ENCODE measurements at regions of chr3 and their contacts with region 1.

Region 1: DNA sequence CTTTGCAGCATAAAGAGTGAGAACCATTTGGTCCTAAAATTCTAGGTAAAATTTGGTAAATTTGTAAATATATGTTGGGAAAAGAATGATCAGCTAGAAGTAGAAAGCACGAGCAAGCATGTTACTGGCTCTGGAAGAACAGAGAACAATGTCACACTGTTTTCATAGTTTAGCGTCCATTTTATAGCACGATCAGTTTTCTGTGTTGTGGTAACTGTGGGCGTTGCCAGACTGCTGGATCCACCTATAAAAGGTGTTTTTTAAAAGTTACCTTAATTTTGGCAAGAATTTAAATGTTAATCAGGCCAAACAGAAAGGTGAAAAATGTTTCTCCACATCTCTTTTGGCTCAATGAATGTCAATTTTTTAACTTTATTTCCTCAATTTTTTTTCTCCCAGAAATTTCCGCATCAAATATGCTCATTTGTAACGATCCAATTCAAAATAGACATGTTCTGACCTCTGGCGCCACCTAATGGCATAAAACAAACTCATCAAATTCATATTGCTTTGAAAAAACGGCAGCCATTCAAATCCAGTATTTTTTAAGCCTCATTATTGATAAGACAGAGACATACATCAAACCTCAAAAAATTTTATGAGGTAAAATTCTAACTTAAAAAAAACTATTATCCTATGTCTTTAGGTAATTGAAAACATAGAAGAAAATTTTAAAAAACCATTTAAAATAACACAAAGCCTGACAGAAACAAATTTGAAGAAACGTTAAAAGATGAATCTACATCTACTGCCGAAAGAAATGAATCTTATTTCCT is 5.5 kb upstream of the GP5 start:
- DNase-seq: no peak
- ATAC-seq: peak; percentile 58; the same call in 2 of the 3 replicates
- H3K4me3 ChIP-seq: no peak overlapping the region
- H3K27ac ChIP-seq: no peak overlapping the region
- H3K4me1 ChIP-seq: no peaks in the 10 kb centered on the region
- H3K27me3 ChIP-seq: no peaks in the 10 kb centered on the region
- CTCF ChIP-seq: peak; percentile 55 to 65 (median 63)
- EP300 ChIP-seq: no peak
- POLR2A ChIP-seq: no peak
- RAD21 ChIP-seq: peak; percentile 56

Region 2: GRCh38 chr3:194333212-194333980 is 71.2 kb before region 1 on chr3:
- CTCF ChIA-PET with region 1: interaction called, 20 read pairs
- POLR2A ChIA-PET with region 1: no interaction called
- RAD21 ChIA-PET with region 1: interaction called, 10 read pairs
- SMC1A ChIA-PET with region 1: interaction called, 4 read pairs
- in situ Hi-C with region 1: loop called (anchors 5 kb)
- intact Hi-C with region 1: loop called (anchors 1 kb)
- DNase-seq: no peak
- ATAC-seq: peak; percentile 99
- H3K4me3 ChIP-seq: peak overlapping the region; percentile 49; the same call in 1 of the 2 replicates
- H3K27ac ChIP-seq: no peak overlapping the region
- H3K4me1 ChIP-seq: no peaks in the 10 kb centered on the region
- H3K27me3 ChIP-seq: peaks cover 0 to 7% of the 10 kb centered on the region in 2 experiments; a peak in 3 of 4 replicates
- CTCF ChIP-seq: peak; percentile 95 to 99 (median 97); a peak in 5 of 6 replicates
- EP300 ChIP-seq: no peak
- POLR2A ChIP-seq: no peak
- RAD21 ChIP-seq: peak; percentile 96

Region 3: GRCh38 chr3:194344012-194344411 is 60.5 kb before region 1 on chr3:
- CTCF ChIA-PET with region 1: interaction called, 37 read pairs
- POLR2A ChIA-PET with region 1: no interaction called
- RAD21 ChIA-PET with region 1: interaction called, 4 read pairs
- SMC1A ChIA-PET with region 1: interaction called, 4 read pairs
- in situ Hi-C with region 1: loop called (anchors 5 kb)
- intact Hi-C with region 1: no loop called
- DNase-seq: no peak
- ATAC-seq: peak; percentile 89
- H3K4me3 ChIP-seq: no peak overlapping the region
- H3K27ac ChIP-seq: no peak overlapping the region
- H3K4me1 ChIP-seq: no peaks in the 10 kb centered on the region
- H3K27me3 ChIP-seq: no peaks in the 10 kb centered on the region; a peak in 3 of 4 replicates
- CTCF ChIP-seq: peak; percentile 84 to 97 (median 91)
- EP300 ChIP-seq: no peak
- POLR2A ChIP-seq: no peak
- RAD21 ChIP-seq: peak; percentile 64

Region 4: GRCh38 chr3:194422188-194422587 is 17.6 kb after region 1 on chr3:
- CTCF ChIA-PET with region 1: interaction called, 10 read pairs
- POLR2A ChIA-PET with region 1: no interaction called
- RAD21 ChIA-PET with region 1: no interaction called
- SMC1A ChIA-PET with region 1: interaction called, 7 read pairs
- in situ Hi-C with region 1: no loop called
- intact Hi-C with region 1: no loop called
- DNase-seq: no peak
- ATAC-seq: no peak
- H3K4me3 ChIP-seq: no peak overlapping the region
- H3K27ac ChIP-seq: no peak overlapping the region
- H3K4me1 ChIP-seq: no peaks in the 10 kb centered on the region
- H3K27me3 ChIP-seq: no peaks in the 10 kb centered on the region
- CTCF ChIP-seq: no peak
- EP300 ChIP-seq: no peak
- POLR2A ChIP-seq: no peak
- RAD21 ChIP-seq: no peak

Measured in GM12878 (cell line).